Naive thymus-derived CD4-positive, alpha-beta T cell (primary cell): ENCODE measurements at regions of chr3 and their contacts with region 1.

Region 1: GRCh38 chr3:27712136-27713077 is 9.7 kb downstream of the EOMES start:
- DNase-seq: peak; percentile 59 to 82 (median 75)
- ATAC-seq: peak; percentile 96
- H3K4me3 ChIP-seq: peak overlapping the region; percentile 77
- H3K4me3 Mint-ChIP-seq: peak overlapping the region; percentile 91 to 100 (median 96)
- H3K27ac ChIP-seq: no peak overlapping the region
- H3K27ac Mint-ChIP-seq: peak overlapping the region in 7 of 9 donors; percentile 16 to 81 (median 61)
- H3K4me1 ChIP-seq: peaks cover 4 to 20% of the 10 kb centered on the region in 2 donors
- H3K4me1 Mint-ChIP-seq: peaks cover 24 to 36% (median 30%) of the 10 kb centered on the region in 7 donors
- H3K27me3 ChIP-seq: peaks cover 0 to 20% of the 10 kb centered on the region in 2 donors
- H3K27me3 Mint-ChIP-seq: peaks cover 37 to 86% (median 41%) of the 10 kb centered on the region in 5 donors

Region 2: DNA sequence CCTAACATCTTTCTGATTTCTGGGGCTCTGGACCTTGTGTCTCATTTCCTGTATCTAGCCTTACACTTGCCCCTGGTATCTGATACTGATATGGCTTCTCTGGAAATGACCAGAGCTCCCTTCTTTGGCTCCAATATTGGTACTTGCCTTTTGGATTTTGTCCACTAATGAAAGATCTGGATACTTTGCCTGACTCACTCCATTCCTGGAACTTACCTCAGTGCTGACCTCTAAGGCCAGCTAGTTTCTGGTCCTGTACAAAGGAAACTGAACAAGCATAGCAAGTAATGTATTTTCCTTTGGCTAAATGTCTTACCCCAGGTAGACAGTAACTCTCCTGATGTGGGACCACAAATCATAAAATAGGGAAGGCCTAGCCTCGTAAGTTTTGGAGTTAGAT is 134.4 kb before region 1 on chr3:
- CTCF ChIA-PET with region 1: no interaction called
- POLR2A ChIA-PET with region 1: no interaction called
- intact Hi-C with region 1: no loop called
- DNase-seq: no peak
- ATAC-seq: no peak
- H3K4me3 ChIP-seq: no peak overlapping the region
- H3K4me3 Mint-ChIP-seq: no peak overlapping the region
- H3K27ac ChIP-seq: no peak overlapping the region
- H3K27ac Mint-ChIP-seq: peak overlapping the region in 1 of 9 donors; percentile 5
- H3K4me1 ChIP-seq: no peaks in the 10 kb centered on the region
- H3K4me1 Mint-ChIP-seq: peaks cover 0 to 6% (median 0%) of the 10 kb centered on the region in 7 donors
- H3K27me3 ChIP-seq: no peaks in the 10 kb centered on the region
- H3K27me3 Mint-ChIP-seq: no peaks in the 10 kb centered on the region

Region 3: GRCh38 chr3:27728195-27729087 is 16.0 kb after region 1 on chr3:
- CTCF ChIA-PET with region 1: interaction called, 30 read pairs
- POLR2A ChIA-PET with region 1: interaction called, 3 read pairs
- intact Hi-C with region 1: loop called in 1 of 2 experiments (anchors 2 kb)
- DNase-seq: no peak
- ATAC-seq: peak; percentile 37
- H3K4me3 ChIP-seq: no peak overlapping the region
- H3K4me3 Mint-ChIP-seq: peak overlapping the region; percentile 46 to 79 (median 69)
- H3K27ac ChIP-seq: no peak overlapping the region
- H3K27ac Mint-ChIP-seq: peak overlapping the region in 2 of 9 donors; percentile 16 to 28
- H3K4me1 ChIP-seq: peaks cover 15 to 40% of the 10 kb centered on the region in 2 donors
- H3K4me1 Mint-ChIP-seq: peaks cover 34 to 55% (median 47%) of the 10 kb centered on the region in 7 donors
- H3K27me3 ChIP-seq: peaks cover 0 to 60% of the 10 kb centered on the region in 2 donors
- H3K27me3 Mint-ChIP-seq: peaks cover 81 to 90% (median 81%) of the 10 kb centered on the region in 5 donors

Region 4: DNA sequence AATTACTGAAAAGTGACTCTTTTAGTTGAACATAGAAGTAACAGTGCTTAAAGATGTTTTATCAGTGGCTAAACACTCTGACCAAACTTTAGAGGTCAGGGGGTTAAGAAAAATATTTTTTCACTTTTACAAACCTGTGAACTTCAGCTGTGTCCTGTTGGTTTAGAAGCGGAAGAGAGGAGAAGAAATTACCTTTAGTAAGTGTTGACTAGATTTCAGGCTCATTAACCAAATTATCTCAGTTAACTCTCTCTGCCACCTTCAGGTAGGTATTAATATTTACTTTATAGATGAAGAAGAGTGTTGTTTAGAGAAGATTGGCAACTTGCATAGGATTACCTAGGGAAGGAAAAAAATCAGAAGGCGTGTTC is 377.1 kb after region 1 on chr3:
- CTCF ChIA-PET with region 1: no interaction called
- POLR2A ChIA-PET with region 1: no interaction called
- intact Hi-C with region 1: loop called (anchors 1 to 5 kb)
- DNase-seq: peak in 5 of 9 donors; percentile 0 to 18 (median 8)
- ATAC-seq: no peak
- H3K4me3 ChIP-seq: no peak overlapping the region
- H3K4me3 Mint-ChIP-seq: peak overlapping the region in 1 of 10 donors; percentile 12
- H3K27ac ChIP-seq: no peak overlapping the region
- H3K27ac Mint-ChIP-seq: no peak overlapping the region
- H3K4me1 ChIP-seq: no peaks in the 10 kb centered on the region
- H3K4me1 Mint-ChIP-seq: peaks cover 0 to 10% (median 0%) of the 10 kb centered on the region in 7 donors
- H3K27me3 ChIP-seq: no peaks in the 10 kb centered on the region
- H3K27me3 Mint-ChIP-seq: no peaks in the 10 kb centered on the region

Region 5: GRCh38 chr3:28286595-28286994 is 574.2 kb after region 1 on chr3:
- CTCF ChIA-PET with region 1: interaction called, 22 read pairs
- POLR2A ChIA-PET with region 1: no interaction called
- intact Hi-C with region 1: loop called (anchors 1 kb)
- DNase-seq: peak in 6 of 9 donors; percentile 12 to 48 (median 36)
- ATAC-seq: peak; percentile 85
- H3K4me3 ChIP-seq: no peak overlapping the region
- H3K4me3 Mint-ChIP-seq: peak overlapping the region in 1 of 10 donors; percentile 66
- H3K27ac ChIP-seq: no peak overlapping the region
- H3K27ac Mint-ChIP-seq: no peak overlapping the region
- H3K4me1 ChIP-seq: peaks cover 0 to 10% of the 10 kb centered on the region in 2 donors
- H3K4me1 Mint-ChIP-seq: peaks cover 2 to 27% (median 13%) of the 10 kb centered on the region in 7 donors
- H3K27me3 ChIP-seq: no peaks in the 10 kb centered on the region
- H3K27me3 Mint-ChIP-seq: no peaks in the 10 kb centered on the region

Region 6: DNA sequence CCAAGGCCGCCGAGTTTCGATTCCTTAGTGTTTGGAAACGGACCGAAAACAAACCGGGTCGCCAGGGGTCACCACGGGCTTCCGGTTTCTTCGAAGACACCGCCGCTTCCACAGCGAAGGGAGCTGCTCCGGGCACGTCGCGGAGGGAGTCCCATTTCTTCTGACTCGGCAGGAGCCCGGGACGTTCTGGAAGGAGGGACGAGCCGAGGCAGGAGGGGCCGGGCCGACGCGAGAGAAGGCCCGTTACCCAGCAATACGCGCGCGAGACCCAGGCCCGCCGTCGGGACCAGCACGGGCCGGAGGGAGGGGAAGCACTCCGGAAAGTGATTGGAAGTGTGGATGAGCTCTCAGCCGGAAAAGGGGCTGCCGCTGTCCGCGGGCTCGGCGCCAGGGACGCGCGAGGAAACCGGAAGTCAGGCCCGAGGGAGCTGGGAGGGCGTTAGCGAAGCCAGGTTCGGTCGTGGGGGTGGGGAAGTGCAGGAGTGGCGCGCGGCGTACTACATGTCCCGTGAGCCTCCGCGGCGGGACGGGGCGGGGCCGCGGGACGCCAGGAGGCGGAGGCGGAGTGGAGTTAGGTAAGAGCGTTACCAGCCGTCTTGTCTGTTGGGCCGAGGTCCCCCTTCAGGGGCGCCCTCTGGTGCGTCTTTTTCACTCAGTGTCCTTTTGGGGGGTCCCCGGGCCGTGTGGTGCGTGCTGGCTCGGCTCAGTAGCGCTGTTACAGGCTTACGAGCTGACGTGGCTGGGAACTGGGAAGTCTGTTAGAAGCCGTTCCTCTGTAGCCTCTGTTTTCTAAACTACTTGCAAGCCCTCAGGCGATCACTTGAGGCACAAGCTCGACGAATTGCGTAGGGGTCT is 636.4 kb after region 1 on chr3 and contains the starts of genes AZI2 and ZCWPW2:
- CTCF ChIA-PET with region 1: interaction called, 4 read pairs
- POLR2A ChIA-PET with region 1: interaction called, 7 read pairs
- intact Hi-C with region 1: loop called (anchors 1 kb)
- DNase-seq: peak; percentile 88 to 93 (median 92)
- ATAC-seq: peak; percentile 92
- H3K4me3 ChIP-seq: peak within 1 kb of the TSS; percentile 93
- H3K4me3 Mint-ChIP-seq: peak within 1 kb of the TSS; percentile 88 to 99 (median 94)
- H3K27ac ChIP-seq: peak within 1 kb of the TSS; percentile 92
- H3K27ac Mint-ChIP-seq: peak within 1 kb of the TSS; percentile 96 to 100 (median 98)
- H3K4me1 ChIP-seq: peaks cover 35 to 39% of the 10 kb centered on the region in 2 donors
- H3K4me1 Mint-ChIP-seq: peaks cover 30 to 70% (median 57%) of the 10 kb centered on the region in 7 donors
- H3K27me3 ChIP-seq: no peaks in the 10 kb centered on the region
- H3K27me3 Mint-ChIP-seq: no peaks in the 10 kb centered on the region
- total RNA-seq, gene AZI2: 39.7 to 54.0 (median 41.2) TPM
- total RNA-seq, gene ZCWPW2: 0.56 to 1.3 (median 0.81) TPM